Activated CD4-positive, alpha-beta memory T cell treated with anti-CD3 and anti-CD28 coated beads for 36 hours (primary cell): ENCODE measurements at regions of chr22 and their contacts with region 1.

Region 1: DNA sequence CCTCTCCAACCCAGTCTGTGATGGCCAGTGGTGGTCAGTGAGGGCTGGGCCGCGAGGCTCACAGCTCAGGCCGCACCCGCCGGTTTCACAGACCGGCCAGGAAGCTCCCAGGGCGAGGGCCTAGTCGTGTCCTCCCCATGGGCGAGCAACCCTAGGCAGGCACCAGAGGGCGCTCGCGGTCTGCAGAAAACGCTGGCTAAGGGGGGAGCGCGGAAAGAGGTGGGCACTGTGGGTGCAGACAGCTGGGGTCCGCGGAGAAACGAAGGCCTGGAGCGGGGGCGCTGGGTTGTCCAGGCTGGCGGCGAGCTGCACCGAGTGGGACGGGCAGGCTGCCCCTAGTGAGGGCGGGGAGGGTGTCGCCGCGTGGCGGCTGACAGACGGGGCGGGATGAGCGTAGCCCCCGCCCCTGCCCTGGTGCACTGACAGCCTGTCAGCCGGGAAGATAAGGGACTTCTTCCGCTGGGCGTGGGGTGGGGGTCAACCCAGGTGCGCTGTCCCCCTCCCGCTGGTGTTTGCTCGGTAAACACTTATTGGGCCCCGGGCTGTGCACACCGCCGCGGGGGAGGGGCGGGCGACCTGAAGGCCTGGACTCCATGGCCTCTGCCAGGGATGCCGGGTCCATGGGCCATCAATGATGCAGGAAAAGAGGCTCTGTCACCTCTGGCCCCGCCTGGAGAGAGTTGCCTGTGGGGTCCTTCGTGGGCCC is 7.5 kb downstream of the GP1BB start:
- DNase-seq: peak; percentile 87
- H3K4me3 Mint-ChIP-seq: peak overlapping the region; percentile 64
- H3K27ac Mint-ChIP-seq: no peak overlapping the region
- H3K4me1 Mint-ChIP-seq: peaks cover 2% of the 10 kb centered on the region
- H3K27me3 Mint-ChIP-seq: peaks cover 1% of the 10 kb centered on the region

Region 2: GRCh38 chr22:19598054-19598855 is 132.6 kb before region 1 on chr22:
- CTCF ChIA-PET with region 1: no interaction called
- POLR2A ChIA-PET with region 1: no interaction called
- intact Hi-C with region 1: no loop called
- DNase-seq: peak; percentile 52
- H3K4me3 Mint-ChIP-seq: no peak overlapping the region
- H3K27ac Mint-ChIP-seq: peak overlapping the region; percentile 72
- H3K4me1 Mint-ChIP-seq: peaks cover 42% of the 10 kb centered on the region
- H3K27me3 Mint-ChIP-seq: no peaks in the 10 kb centered on the region

Region 3: DNA sequence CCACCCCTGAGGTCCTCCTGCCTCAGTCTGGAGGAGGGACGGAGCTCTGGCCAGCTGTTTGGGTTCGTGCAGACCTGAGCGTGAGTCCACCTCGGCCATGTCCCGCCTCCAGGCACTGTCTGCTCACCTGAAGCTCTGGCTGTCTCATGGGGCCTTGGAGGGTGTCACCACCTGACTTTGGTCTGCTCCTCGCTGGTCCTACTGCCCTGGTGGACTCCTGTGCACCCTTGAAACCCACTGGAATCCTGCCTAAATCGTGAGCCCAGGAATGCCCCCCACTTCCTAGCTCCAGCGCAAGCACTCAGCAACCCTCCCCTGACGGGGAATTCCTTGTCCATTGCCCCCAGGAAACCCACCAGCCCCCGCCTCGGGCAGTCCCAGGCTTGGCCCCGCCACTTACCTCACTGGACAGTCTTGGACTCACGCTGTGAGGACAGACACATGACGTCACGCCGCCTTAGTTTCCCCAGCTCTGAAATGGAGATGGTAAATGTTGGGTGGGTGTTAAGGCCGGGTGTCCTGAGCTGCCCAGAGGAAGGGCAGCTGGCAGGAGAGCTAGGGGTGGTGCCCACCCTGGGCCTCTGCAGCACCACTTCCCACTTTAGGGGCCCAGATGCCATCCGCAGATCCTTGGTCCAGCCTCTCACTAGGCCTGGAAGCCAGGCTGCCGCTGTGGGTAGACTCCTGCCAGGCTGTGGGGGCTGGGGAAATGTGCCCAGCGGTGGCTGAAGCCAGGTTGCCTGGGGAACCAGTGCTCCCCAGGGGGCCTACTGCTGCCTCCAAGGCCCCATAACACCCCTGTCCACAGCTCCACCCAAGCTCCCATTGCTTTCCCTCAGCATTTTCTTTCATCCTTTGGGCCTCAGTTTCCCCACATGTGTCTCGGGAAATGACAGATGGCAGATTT is 11.6 kb after region 1 on chr22:
- CTCF ChIA-PET with region 1: interaction called, 15 read pairs
- POLR2A ChIA-PET with region 1: no interaction called
- intact Hi-C with region 1: no loop called
- DNase-seq: no peak
- H3K4me3 Mint-ChIP-seq: no peak overlapping the region
- H3K27ac Mint-ChIP-seq: no peak overlapping the region
- H3K4me1 Mint-ChIP-seq: no peaks in the 10 kb centered on the region
- H3K27me3 Mint-ChIP-seq: no peaks in the 10 kb centered on the region

Region 4: DNA sequence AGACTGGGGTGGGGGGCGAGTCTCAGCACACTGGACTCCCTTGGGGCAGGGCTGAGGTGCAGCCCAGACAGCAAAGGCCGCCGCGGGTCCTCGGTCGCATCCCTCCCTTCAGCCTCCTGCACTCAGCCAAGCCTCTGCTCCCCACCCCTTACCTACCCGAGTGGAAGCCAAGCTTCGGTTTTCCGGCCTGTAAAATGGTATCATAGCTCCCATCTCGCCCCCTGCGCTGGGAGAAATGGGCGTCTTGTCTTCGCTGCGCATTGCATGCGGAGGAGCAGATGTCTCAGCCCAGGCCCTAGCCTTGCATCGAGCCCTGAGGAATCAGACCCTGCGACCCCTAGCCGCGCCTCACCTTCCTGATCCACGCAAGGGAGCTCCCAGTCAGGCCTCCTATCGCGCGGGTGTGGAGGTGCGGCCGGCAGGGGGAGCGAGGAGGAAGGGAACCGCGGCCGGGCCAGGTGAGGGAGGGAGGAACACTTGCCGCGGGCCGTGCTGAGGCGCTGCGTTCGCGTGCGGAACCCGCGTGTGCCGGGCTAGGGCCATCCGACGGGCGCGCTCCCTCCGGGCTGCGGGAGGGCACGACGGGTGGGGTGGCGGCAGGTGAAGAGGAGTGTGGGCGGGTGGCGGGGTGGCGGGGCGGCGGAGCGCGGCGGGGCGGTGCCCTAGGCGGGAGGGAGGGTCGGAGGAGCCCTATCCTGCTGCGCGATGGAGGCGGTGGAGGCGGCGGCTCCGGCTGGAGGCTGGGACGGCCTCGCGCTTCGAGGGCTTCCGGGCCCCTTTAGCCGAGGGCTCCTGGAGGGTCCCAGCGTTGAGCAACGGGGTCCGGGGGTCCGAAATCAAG is 25.7 kb after region 1 on chr22:
- CTCF ChIA-PET with region 1: interaction called, 13 read pairs
- POLR2A ChIA-PET with region 1: no interaction called
- intact Hi-C with region 1: no loop called
- DNase-seq: peak; percentile 78
- H3K4me3 Mint-ChIP-seq: peak overlapping the region; percentile 16
- H3K27ac Mint-ChIP-seq: no peak overlapping the region
- H3K4me1 Mint-ChIP-seq: peaks cover 28% of the 10 kb centered on the region
- H3K27me3 Mint-ChIP-seq: peaks cover 57% of the 10 kb centered on the region

Region 5: GRCh38 chr22:19779685-19780268 is 49.0 kb after region 1 on chr22:
- CTCF ChIA-PET with region 1: interaction called, 10 read pairs
- POLR2A ChIA-PET with region 1: no interaction called
- intact Hi-C with region 1: no loop called
- DNase-seq: no peak
- H3K4me3 Mint-ChIP-seq: no peak overlapping the region
- H3K27ac Mint-ChIP-seq: no peak overlapping the region
- H3K4me1 Mint-ChIP-seq: peaks cover 2% of the 10 kb centered on the region
- H3K27me3 Mint-ChIP-seq: peaks cover 12% of the 10 kb centered on the region

Region 6: GRCh38 chr22:19903031-19903430 is 172.2 kb after region 1 on chr22:
- CTCF ChIA-PET with region 1: interaction called, 19 read pairs
- POLR2A ChIA-PET with region 1: no interaction called
- intact Hi-C with region 1: no loop called
- DNase-seq: no peak
- H3K4me3 Mint-ChIP-seq: no peak overlapping the region
- H3K27ac Mint-ChIP-seq: no peak overlapping the region
- H3K4me1 Mint-ChIP-seq: no peaks in the 10 kb centered on the region
- H3K27me3 Mint-ChIP-seq: no peaks in the 10 kb centered on the region

Region 7: GRCh38 chr22:19941365-19942082 is 210.7 kb after region 1 on chr22 and contains the starts of genes COMT and TXNRD2:
- CTCF ChIA-PET with region 1: interaction called, 14 read pairs
- POLR2A ChIA-PET with region 1: no interaction called
- intact Hi-C with region 1: loop called (anchors 2 kb)
- DNase-seq: peak; percentile 80
- H3K4me3 Mint-ChIP-seq: peak within 1 kb of the TSS; percentile 96
- H3K27ac Mint-ChIP-seq: peak within 1 kb of the TSS; percentile 94
- H3K4me1 Mint-ChIP-seq: peaks cover 27% of the 10 kb centered on the region
- H3K27me3 Mint-ChIP-seq: no peaks in the 10 kb centered on the region
- total RNA-seq, gene COMT: 61.7 to 66.1 TPM
- total RNA-seq, gene TXNRD2: 23.3 to 23.4 TPM